ENCODE measurements at regions of chr1 and their contacts with region 1.

Region 1: DNA sequence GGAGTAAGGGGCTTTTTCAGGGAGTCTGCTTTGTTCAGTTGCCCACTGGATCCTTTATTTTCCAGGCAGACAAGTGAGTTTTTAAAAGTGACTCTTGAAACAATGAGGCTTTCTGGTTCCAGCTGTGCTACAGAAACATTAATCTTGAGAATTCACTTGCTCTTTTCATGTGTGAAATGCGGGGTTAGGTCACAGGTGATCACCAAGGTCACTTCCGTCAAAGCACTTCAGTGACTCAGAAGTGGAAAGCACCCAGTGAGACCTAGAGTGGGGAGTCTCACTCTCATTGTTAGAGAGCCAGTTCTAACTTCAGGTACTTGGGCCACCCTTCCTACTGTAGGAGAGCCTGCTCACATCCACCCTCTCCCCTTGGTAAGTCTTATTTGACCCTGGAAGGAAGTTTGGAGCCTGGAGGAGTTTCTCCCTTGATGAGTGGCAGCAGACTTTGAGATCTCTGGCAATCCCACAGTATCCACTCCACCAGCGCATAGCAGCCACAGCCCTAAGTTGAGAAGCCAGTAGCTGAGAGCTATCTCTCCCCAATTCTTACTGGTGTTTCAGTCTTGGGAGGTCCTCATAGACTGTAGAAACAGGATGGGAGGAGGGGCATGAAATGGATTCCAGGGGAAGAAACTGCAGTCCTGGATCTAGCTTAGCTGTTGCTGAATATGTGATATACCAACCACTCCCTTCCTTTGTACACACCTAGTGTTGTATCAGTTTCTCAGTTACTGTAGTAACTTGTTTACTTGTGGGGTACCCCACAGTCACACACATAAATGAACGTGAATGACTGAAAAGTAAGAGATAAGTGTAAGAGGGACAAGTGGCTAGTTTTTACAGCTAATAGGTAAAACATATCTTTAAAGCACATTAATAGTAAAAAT is 3.1 kb downstream of the TACSTD2 start:
- DNase-seq: peak; percentile 68
- H3K4me3 ChIP-seq: no peak overlapping the region
- H3K27ac ChIP-seq: no peak overlapping the region
- H3K4me1 ChIP-seq: peaks cover 22% of the 10 kb centered on the region
- H3K27me3 ChIP-seq: no peaks in the 10 kb centered on the region
- CTCF ChIP-seq: no peak
- POLR2A ChIP-seq: no peak

Region 2: DNA sequence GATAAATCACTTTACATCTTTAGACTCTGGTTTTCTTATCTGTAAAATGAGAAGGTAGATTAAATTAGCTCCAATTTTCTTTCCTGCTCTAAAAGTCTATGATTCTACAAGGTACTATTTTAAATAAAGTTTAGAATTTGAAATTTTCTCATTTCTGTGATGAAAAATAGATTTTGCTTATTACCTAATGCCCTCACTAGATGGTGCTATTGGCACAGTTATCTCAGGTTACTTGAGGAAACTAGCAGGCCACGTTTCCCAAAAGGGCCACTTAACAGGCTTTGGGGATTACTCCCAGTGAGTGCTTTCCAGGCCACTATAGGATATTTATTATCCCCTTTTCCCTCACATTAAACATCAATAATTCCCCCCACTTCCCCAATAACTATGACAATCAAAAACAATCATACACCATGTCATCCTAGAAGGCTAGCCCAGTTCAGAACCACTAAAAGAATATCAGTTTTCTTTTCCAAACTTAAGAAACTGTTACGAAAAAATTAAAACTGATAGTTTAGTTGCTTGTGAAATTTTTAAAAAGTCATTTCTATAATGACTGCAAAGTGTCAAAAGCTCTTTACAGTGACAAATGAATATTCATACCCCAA is 58.0 kb before region 1 on chr1:
- CTCF ChIA-PET with region 1: no interaction called
- POLR2A ChIA-PET with region 1: no interaction called
- dilution Hi-C with region 1: no loop called
- intact Hi-C with region 1: loop called (anchors 5 kb)
- DNase-seq: peak; percentile 71
- H3K4me3 ChIP-seq: no peak overlapping the region
- H3K27ac ChIP-seq: no peak overlapping the region
- H3K4me1 ChIP-seq: no peaks in the 10 kb centered on the region
- H3K27me3 ChIP-seq: no peaks in the 10 kb centered on the region
- CTCF ChIP-seq: peak; percentile 37 to 58
- POLR2A ChIP-seq: no peak

Region 3: DNA sequence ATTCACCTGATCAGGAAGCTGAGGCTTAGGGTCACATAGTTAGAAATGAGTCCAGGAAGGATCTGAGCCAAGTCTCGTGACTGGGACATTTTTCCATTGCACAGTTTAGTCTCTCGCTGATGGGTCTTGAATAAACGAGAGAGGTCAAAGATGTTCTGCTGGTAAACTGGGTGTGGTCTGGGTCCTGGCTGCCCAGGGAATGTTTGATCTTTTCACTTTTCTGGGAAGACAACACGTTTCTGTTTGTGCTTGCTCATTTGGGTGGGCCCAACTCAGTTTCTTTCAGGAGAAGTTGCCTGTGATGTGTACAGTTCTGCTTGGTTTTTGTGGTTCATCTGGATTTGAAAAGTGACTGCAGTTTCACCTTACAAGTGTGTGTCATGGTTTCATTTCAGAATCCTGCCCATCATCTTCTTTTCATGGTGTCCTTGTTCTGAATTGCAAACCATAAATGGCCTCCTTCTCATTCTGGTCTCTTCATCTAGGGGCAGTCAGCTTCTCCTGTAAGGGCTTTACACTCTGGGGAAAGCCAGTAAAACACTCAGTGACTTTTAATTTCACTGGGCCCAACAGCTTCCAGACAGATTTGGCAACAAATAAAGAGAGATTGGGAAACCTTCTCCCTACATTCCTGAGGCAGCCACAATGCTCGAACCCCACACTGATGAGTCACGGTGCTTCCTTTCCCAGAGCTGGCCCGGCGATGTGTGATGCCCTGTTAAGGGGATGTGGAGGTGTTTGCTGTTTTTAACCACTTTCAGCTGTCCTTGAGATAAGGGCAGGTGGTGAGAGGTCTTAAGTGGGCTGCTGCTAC is 10.3 kb after region 1 on chr1:
- CTCF ChIA-PET with region 1: interaction called, 12 read pairs
- POLR2A ChIA-PET with region 1: interaction called, 3 read pairs
- dilution Hi-C with region 1: no loop called
- intact Hi-C with region 1: no loop called
- DNase-seq: peak; percentile 89
- H3K4me3 ChIP-seq: peak overlapping the region in 1 of 3 experiments; percentile 6
- H3K27ac ChIP-seq: peak overlapping the region; percentile 89
- H3K4me1 ChIP-seq: peaks cover 40% of the 10 kb centered on the region
- H3K27me3 ChIP-seq: no peaks in the 10 kb centered on the region
- CTCF ChIP-seq: no peak
- POLR2A ChIP-seq: no peak

Region 4: GRCh38 chr1:58592529-58593134 is 18.7 kb after region 1 on chr1:
- CTCF ChIA-PET with region 1: interaction called, 3 read pairs
- POLR2A ChIA-PET with region 1: interaction called, 4 read pairs
- dilution Hi-C with region 1: no loop called
- intact Hi-C with region 1: loop called (anchors 1 kb)
- DNase-seq: peak; percentile 98
- H3K4me3 ChIP-seq: no peak overlapping the region
- H3K27ac ChIP-seq: peak overlapping the region; percentile 91
- H3K4me1 ChIP-seq: peaks cover 22% of the 10 kb centered on the region
- H3K27me3 ChIP-seq: no peaks in the 10 kb centered on the region
- CTCF ChIP-seq: no peak
- POLR2A ChIP-seq: peak; percentile 79

Region 5: DNA sequence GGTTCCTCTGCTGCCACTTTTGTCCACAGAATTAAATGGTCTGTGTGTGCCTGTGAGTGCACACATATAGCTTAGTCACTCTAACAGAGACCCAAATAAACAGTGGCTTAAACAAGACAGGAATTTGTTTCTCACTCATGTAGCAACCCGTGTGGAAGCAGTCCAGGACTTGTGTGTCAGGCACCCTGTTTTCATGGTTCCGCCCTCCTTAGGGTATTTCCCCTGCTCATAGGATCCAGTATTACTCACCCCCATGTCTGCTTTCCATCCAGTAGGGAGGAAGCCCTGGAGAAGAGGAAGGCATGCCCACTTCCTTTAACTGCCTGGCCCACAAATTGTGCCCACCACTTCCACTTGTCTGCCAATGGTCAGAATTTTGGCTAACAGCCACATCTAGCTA is 44.4 kb after region 1 on chr1:
- CTCF ChIA-PET with region 1: interaction called, 6 read pairs
- POLR2A ChIA-PET with region 1: no interaction called
- dilution Hi-C with region 1: no loop called
- intact Hi-C with region 1: loop called (anchors 2 kb)
- DNase-seq: peak; percentile 96
- H3K4me3 ChIP-seq: no peak overlapping the region
- H3K27ac ChIP-seq: peak overlapping the region; percentile 77
- H3K4me1 ChIP-seq: peaks cover 32% of the 10 kb centered on the region
- H3K27me3 ChIP-seq: no peaks in the 10 kb centered on the region
- CTCF ChIP-seq: no peak
- POLR2A ChIP-seq: no peak